ENCODE measurements at regions of chr7 and their contacts with region 1.

Region 1: GRCh38 chr7:27129729-27130539 is 623 bp downstream of the HOXA4 start:
- DNase-seq: no peak

Region 2: DNA sequence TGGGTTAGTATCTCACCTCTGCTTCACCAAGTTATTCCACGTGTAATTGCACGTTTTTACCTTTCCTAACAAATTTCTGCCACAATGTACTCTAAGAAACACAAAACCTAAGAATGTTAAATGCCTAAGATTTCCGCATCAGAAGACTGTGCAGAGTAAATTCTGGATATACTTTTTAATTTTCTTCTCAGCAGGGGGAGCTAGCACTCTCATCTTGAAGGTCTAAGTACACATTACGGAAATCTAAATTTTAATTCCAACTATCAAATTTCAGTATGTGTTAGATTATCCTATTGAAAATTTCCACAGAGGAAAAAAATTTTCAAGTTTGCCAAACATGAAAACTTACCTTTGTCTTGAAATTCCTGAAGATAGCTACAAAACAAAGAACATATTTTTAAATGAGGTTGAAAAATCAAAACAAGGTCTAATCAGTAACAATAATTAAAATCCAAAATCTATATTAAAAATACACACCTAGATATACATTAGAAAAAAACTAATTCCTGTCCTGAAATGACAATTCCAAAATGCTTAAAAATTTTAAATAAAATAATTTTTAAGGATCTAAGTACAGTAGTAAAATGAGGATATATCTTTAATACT is 276.0 kb before region 1 on chr7:
- intact Hi-C with region 1: loop called (anchors 10 kb)
- DNase-seq: no peak

Measured in head of caudate nucleus (tissue), 42 donors.